Right ventricle myocardium inferior (tissue), 1 donor: ENCODE measurements at regions of chr2 and their contacts with region 1.

Region 1: DNA sequence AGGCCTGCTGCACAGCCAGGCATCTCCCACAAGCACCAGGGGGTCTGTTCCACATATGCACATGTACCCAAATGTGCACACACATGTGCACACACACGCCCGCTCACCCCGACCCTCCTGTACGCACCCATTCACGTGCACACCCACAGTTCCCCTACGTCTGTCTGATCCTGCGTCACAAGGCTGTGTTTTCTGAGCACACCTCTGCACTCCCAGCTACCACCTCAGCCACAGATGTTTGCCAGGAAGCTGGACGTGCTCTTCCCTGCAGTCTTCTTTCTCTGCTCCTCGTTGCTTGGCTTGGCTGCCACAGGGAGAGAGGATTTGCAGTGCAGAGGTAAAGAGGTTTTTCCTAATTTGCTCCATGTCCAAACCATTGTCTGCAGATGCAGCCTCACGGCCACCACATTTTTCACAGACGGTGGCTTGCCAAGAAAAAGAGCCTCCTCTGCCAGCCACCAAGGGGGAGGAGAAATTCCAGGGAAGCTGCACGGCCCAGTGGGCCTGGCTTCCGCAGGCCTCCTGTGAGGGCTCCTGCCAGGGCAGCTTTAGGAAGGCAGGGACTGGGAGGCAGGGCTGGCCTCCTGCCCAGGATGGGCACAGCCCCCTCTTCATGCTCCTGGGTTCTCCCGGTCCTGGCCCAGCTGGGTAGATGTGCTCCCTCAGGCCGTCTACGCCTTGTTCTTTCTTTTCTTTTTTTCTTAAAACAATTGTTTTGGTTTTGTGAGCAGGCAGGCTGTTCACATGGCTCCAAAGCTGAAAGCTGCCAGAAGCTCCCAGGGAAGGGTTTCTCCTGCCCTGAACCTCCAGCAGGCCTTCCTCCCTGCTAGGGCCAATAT is 29.3 kb upstream of the HS6ST1 start:
- DNase-seq: peak; percentile 86
- ATAC-seq: peak; percentile 96

Region 2: GRCh38 chr2:127884436-127885345 is 463.2 kb before region 1 on chr2:
- intact Hi-C with region 1: no loop called
- DNase-seq: no peak
- ATAC-seq: no peak

Region 3: GRCh38 chr2:128305159-128306087 is 42.5 kb before region 1 on chr2:
- intact Hi-C with region 1: no loop called
- DNase-seq: peak; percentile 84
- ATAC-seq: peak; percentile 71

Region 4: DNA sequence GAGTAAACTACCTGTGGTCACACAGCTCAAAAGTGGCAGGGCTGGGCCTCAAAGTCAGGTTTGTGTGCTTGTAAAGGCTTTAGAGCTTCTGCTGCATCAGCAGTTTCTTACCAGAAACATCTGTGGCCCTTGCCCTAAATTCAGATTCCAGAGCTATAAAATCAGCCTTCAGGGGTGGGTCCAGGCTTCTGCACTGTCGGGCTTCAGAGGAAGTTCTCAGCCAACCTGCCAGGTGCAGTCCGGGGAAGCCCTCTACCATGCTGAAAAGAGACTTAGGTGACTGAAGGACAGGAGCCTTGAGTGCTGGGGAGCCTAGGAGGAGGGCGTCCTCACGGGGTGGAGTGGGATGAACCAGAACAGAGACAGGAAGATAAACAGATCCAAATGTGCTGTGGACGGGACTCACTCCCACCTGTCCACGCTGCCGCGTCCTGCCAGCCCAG is 40.6 kb after region 1 on chr2:
- intact Hi-C with region 1: no loop called
- DNase-seq: peak; percentile 31
- ATAC-seq: no peak

Region 5: GRCh38 chr2:128442053-128442751 is 94.3 kb after region 1 on chr2:
- intact Hi-C with region 1: loop called (anchors 5 kb)
- DNase-seq: no peak
- ATAC-seq: no peak

Region 6: DNA sequence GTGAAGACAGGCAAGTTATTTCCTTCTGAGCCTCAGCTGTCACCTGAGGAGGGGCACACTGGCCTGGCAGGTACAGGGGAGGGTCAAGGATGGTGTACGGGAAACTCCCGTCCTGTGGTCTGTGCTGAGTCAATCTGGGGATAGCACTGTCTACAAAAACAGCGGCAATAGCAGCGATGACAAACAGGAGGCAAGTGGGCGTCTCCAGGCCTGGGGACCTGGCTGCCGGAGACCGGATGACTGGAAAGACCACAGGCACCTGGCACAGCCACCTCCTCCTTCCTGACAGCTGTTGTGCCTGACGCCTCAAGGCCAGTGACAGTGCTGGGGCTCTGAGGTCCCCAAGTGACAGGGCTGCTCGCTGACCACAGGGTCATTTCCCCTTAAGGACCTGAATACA is 172.9 kb after region 1 on chr2:
- intact Hi-C with region 1: no loop called
- DNase-seq: no peak
- ATAC-seq: no peak